HCT116 (cell line): ENCODE measurements at regions of chr9 and their contacts with region 1.

Region 1: GRCh38 chr9:108002371-108002956 is 512.9 kb upstream of the KLF4 start:
- DNase-seq: peak; percentile 4
- ATAC-seq: no peak
- H3K4me3 ChIP-seq: peak overlapping the region in 1 of 2 experiments; percentile 8; a peak in 2 of 4 replicates
- H3K27ac ChIP-seq: peak overlapping the region; percentile 82
- H3K4me1 ChIP-seq: peaks cover 41 to 63% of the 10 kb centered on the region in 2 experiments
- H3K27me3 ChIP-seq: no peaks in the 10 kb centered on the region
- CTCF ChIP-seq: no peak
- POLR2A ChIP-seq: no peak
- RAD21 ChIP-seq: no peak

Region 2: GRCh38 chr9:107755284-107755683 is 247.2 kb before region 1 on chr9:
- CTCF ChIA-PET with region 1: no interaction called
- POLR2A ChIA-PET with region 1: no interaction called
- RAD21 ChIA-PET with region 1: no interaction called
- intact Hi-C with region 1: loop called (anchors 2 kb)
- DNase-seq: peak; percentile 95
- ATAC-seq: peak; percentile 75
- H3K4me3 ChIP-seq: peak overlapping the region in 1 of 2 experiments; percentile 13; a peak in 2 of 4 replicates
- H3K27ac ChIP-seq: peak overlapping the region; percentile 80
- H3K4me1 ChIP-seq: peaks cover 46 to 81% of the 10 kb centered on the region in 2 experiments
- H3K27me3 ChIP-seq: no peaks in the 10 kb centered on the region
- CTCF ChIP-seq: no peak
- POLR2A ChIP-seq: no peak
- RAD21 ChIP-seq: no peak

Region 3: GRCh38 chr9:107856633-107857032 is 145.8 kb before region 1 on chr9:
- CTCF ChIA-PET with region 1: no interaction called
- POLR2A ChIA-PET with region 1: no interaction called
- RAD21 ChIA-PET with region 1: no interaction called
- intact Hi-C with region 1: no loop called
- DNase-seq: no peak
- ATAC-seq: peak; percentile 62
- H3K4me3 ChIP-seq: no peak overlapping the region
- H3K27ac ChIP-seq: no peak overlapping the region
- H3K4me1 ChIP-seq: no peaks in the 10 kb centered on the region
- H3K27me3 ChIP-seq: no peaks in the 10 kb centered on the region
- CTCF ChIP-seq: no peak
- POLR2A ChIP-seq: no peak
- RAD21 ChIP-seq: no peak

Region 4: GRCh38 chr9:107929443-107929842 is 73.0 kb before region 1 on chr9:
- CTCF ChIA-PET with region 1: no interaction called
- POLR2A ChIA-PET with region 1: no interaction called
- RAD21 ChIA-PET with region 1: no interaction called
- intact Hi-C with region 1: no loop called
- DNase-seq: no peak
- ATAC-seq: no peak
- H3K4me3 ChIP-seq: no peak overlapping the region
- H3K27ac ChIP-seq: no peak overlapping the region
- H3K4me1 ChIP-seq: no peaks in the 10 kb centered on the region
- H3K27me3 ChIP-seq: no peaks in the 10 kb centered on the region
- CTCF ChIP-seq: no peak
- POLR2A ChIP-seq: no peak
- RAD21 ChIP-seq: no peak

Region 5: DNA sequence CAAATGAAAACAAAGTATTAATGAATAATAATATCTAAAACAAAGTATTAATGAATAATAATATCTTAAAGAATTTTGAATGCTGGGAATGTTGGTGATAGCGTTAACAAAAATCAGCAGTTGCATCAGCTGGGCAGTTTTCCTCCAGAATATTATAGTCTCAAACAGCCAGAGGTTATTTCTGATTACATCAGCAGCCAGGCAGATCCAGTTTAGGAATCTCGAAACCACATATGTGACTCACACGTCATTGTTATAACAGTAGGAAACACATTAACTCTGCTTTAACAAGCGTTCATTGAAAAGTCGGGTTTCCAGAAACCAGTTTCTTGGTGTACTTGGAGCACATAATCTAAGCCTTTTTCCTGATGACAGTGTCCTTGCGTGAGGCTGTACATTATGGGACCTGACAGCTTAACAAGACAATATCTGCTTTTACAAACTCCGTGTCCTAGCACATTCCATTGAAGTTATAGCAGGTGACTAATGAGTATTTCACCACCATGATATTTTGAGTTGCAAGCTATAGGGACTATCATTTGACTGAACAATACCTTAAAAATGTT is 46.6 kb after region 1 on chr9:
- CTCF ChIA-PET with region 1: no interaction called
- POLR2A ChIA-PET with region 1: interaction called, 5 read pairs
- RAD21 ChIA-PET with region 1: interaction called in 1 of 2 experiments, 3 read pairs
- intact Hi-C with region 1: loop called (anchors 2 kb)
- DNase-seq: peak; percentile 92
- ATAC-seq: peak; percentile 79
- H3K4me3 ChIP-seq: peak overlapping the region in 1 of 2 experiments; percentile 40; a peak in 2 of 4 replicates
- H3K27ac ChIP-seq: peak overlapping the region; percentile 17; the same call in 1 of the 2 replicates
- H3K4me1 ChIP-seq: peaks cover 9 to 66% of the 10 kb centered on the region in 2 experiments
- H3K27me3 ChIP-seq: no peaks in the 10 kb centered on the region
- CTCF ChIP-seq: no peak
- POLR2A ChIP-seq: no peak
- RAD21 ChIP-seq: peak; percentile 41

Region 6: DNA sequence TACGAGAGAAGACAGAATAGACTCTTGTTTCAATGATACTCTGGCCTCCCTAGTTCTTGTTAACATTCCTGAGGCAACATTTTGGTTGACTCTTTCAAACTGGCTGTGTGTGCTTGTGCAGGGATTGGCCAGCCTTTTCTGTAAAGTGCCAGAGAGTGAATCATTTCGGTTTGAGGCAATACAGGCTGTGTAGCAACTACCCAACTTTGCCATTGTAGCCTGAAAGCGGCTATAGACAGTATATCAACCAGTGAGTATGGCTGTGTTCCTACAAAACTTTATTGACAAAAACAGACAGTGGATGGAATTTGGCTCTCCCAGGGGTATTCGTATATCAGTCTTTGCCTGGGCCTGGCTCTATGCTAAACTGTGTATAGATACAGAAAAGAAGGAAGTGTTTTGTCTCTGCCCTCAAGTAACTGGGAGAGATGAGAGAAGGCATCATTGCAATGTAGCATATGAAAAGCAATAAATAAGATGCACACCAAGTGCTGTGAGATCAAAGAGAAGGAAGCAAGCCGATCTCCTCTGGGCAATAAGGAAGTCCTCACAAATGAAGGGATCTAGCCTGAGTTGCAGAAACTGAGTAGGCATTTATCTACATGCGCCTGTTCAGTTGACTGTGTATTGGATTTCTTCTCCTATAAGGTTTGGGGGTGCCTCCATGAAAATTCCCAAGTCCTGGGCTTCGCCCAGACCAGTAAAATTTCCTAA is 55.1 kb after region 1 on chr9:
- CTCF ChIA-PET with region 1: no interaction called
- POLR2A ChIA-PET with region 1: interaction called, 4 read pairs
- RAD21 ChIA-PET with region 1: no interaction called
- intact Hi-C with region 1: loop called (anchors 2 kb)
- DNase-seq: no peak
- ATAC-seq: peak; percentile 74
- H3K4me3 ChIP-seq: peak overlapping the region in 1 of 2 experiments; percentile 31; a peak in 2 of 4 replicates
- H3K27ac ChIP-seq: peak overlapping the region; percentile 11; the same call in 1 of the 2 replicates
- H3K4me1 ChIP-seq: peaks cover 39 to 81% of the 10 kb centered on the region in 2 experiments
- H3K27me3 ChIP-seq: no peaks in the 10 kb centered on the region
- CTCF ChIP-seq: no peak
- POLR2A ChIP-seq: no peak
- RAD21 ChIP-seq: 0 out of 2 replicates have a peak, but pooled peaks have one; percentile 11

Region 7: DNA sequence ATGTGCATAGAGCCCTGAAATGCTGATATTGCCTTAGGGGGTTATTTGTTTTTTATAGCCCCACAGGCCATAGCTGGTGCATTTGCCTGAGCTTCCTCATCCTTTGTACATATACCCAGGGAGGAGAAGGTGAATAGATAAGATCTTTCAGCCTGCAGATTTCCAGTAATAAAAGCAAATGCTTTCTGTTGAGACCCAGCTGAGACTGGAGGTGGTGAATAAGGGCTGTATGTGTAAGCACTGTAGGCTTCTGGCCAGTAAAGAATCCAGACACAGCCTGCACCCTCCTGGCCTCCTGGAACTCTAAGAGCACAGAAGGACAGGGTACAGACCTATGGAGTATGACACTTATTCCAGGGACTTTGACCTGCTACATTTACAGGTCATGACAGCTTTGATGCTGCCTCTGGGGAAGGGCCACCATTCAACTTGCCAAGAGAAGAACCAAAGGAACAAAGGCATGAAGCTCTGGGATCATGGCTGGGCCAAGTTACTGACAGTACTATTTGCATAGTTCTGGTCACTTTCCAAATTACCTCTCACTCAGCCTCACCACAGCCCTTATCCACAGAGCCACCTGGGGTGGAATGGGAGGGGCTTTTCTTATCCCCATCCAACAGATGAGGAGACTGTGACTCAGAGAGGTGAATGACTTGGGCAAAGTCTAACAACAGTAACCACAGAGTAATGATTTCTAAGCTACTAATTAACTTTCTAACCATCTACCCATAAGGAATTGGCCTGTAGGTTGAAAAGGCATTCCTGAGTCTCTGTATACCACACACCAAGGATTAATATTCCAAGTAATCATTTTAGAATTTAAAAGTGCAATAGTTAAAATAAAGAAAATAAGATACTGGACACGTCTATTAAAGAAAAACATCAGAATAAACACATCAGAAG is 91.6 kb after region 1 on chr9:
- CTCF ChIA-PET with region 1: no interaction called
- POLR2A ChIA-PET with region 1: no interaction called
- RAD21 ChIA-PET with region 1: no interaction called
- intact Hi-C with region 1: loop called (anchors 1 kb)
- DNase-seq: peak; percentile 97
- ATAC-seq: peak; percentile 95
- H3K4me3 ChIP-seq: peak overlapping the region in 1 of 2 experiments; percentile 29; a peak in 2 of 4 replicates
- H3K27ac ChIP-seq: peak overlapping the region; percentile 69
- H3K4me1 ChIP-seq: peaks cover 20 to 34% of the 10 kb centered on the region in 2 experiments
- H3K27me3 ChIP-seq: no peaks in the 10 kb centered on the region
- CTCF ChIP-seq: no peak
- POLR2A ChIP-seq: no peak
- RAD21 ChIP-seq: peak; percentile 34